Activated CD4-positive, alpha-beta T cell treated with anti-CD3 and anti-CD28 coated beads, Interleukin-2, amount 10 ng/mL, durations not matched to agents 24 days and 14 days (primary cell): ENCODE measurements at regions of chr6 and their contacts with region 1.

Region 1: DNA sequence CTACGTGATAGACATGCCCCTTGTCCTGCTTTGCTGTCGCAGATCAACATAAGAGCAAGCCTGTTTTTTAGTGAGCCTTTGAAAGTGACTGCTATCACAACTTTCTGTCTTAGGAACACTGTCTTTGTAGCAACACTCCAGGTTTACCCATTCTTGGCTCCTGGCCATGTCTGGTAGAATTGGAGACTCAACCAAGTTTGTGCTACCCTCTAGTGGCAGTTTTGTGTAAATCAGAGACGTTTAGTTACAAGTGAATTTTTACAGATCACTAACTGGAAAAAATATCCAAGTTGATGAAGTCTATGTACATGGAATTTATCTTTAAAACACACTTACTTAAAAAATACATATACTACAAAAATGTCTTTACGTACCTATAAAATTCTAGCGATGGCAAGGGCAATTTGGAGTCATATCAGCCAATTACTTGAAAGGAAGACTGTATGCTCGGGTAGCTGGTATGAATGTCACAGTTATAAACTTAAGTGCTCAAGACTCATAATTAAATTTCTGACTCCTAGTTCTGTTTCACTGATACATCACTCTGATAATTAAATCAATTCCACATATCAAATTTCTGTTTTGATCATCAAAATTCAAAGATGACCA is 101.4 kb downstream of the ADGB start:
- DNase-seq: peak; percentile 73
- H3K4me3 Mint-ChIP-seq: no peak overlapping the region
- H3K27ac Mint-ChIP-seq: no peak overlapping the region
- H3K4me1 Mint-ChIP-seq: no peaks in the 10 kb centered on the region
- H3K27me3 Mint-ChIP-seq: peaks cover 2% of the 10 kb centered on the region

Region 2: GRCh38 chr6:145929037-145929633 is 771.0 kb before region 1 on chr6:
- intact Hi-C with region 1: loop called (anchors 1 kb)
- DNase-seq: peak; percentile 66
- H3K4me3 Mint-ChIP-seq: no peak overlapping the region
- H3K27ac Mint-ChIP-seq: no peak overlapping the region
- H3K4me1 Mint-ChIP-seq: peaks cover 1% of the 10 kb centered on the region
- H3K27me3 Mint-ChIP-seq: no peaks in the 10 kb centered on the region